ENCODE measurements at regions of chr3 and their contacts with region 1.

Region 1: GRCh38 chr3:169780742-169781141 is 7.5 kb downstream of the MYNN start:
- DNase-seq: no peak
- ATAC-seq: no peak
- H3K4me3 ChIP-seq: no peak overlapping the region
- H3K4me3 Mint-ChIP-seq: peak overlapping the region in 3 of 10 donors; percentile 21 to 87 (median 35)
- H3K27ac ChIP-seq: no peak overlapping the region
- H3K27ac Mint-ChIP-seq: peak overlapping the region in 5 of 9 donors; percentile 7 to 77 (median 25)
- H3K4me1 ChIP-seq: peaks cover 0 to 11% of the 10 kb centered on the region in 2 donors
- H3K4me1 Mint-ChIP-seq: peaks cover 30 to 56% (median 49%) of the 10 kb centered on the region in 7 donors
- H3K27me3 ChIP-seq: no peaks in the 10 kb centered on the region
- H3K27me3 Mint-ChIP-seq: no peaks in the 10 kb centered on the region

Region 2: GRCh38 chr3:169227911-169228310 is 552.8 kb before region 1 on chr3:
- CTCF ChIA-PET with region 1: no interaction called
- POLR2A ChIA-PET with region 1: no interaction called
- intact Hi-C with region 1: no loop called
- DNase-seq: no peak
- ATAC-seq: peak; percentile 69
- H3K4me3 ChIP-seq: no peak overlapping the region
- H3K4me3 Mint-ChIP-seq: no peak overlapping the region
- H3K27ac ChIP-seq: no peak overlapping the region
- H3K27ac Mint-ChIP-seq: no peak overlapping the region
- H3K4me1 ChIP-seq: no peaks in the 10 kb centered on the region
- H3K4me1 Mint-ChIP-seq: peaks cover 0 to 10% (median 0%) of the 10 kb centered on the region in 7 donors
- H3K27me3 ChIP-seq: no peaks in the 10 kb centered on the region
- H3K27me3 Mint-ChIP-seq: peaks cover 10 to 46% (median 18%) of the 10 kb centered on the region in 5 donors

Region 3: GRCh38 chr3:169790687-169791429 is 10.1 kb after region 1 on chr3:
- CTCF ChIA-PET with region 1: no interaction called
- POLR2A ChIA-PET with region 1: no interaction called
- intact Hi-C with region 1: loop called in 1 of 2 experiments (anchors 2 kb)
- DNase-seq: no peak
- ATAC-seq: no peak
- H3K4me3 ChIP-seq: no peak overlapping the region
- H3K4me3 Mint-ChIP-seq: no peak overlapping the region
- H3K27ac ChIP-seq: no peak overlapping the region
- H3K27ac Mint-ChIP-seq: peak overlapping the region in 1 of 9 donors; percentile 50
- H3K4me1 ChIP-seq: no peaks in the 10 kb centered on the region
- H3K4me1 Mint-ChIP-seq: peaks cover 0 to 21% (median 0%) of the 10 kb centered on the region in 7 donors
- H3K27me3 ChIP-seq: no peaks in the 10 kb centered on the region
- H3K27me3 Mint-ChIP-seq: no peaks in the 10 kb centered on the region

Region 4: GRCh38 chr3:170007031-170007663 is 226.4 kb after region 1 on chr3:
- CTCF ChIA-PET with region 1: no interaction called
- POLR2A ChIA-PET with region 1: no interaction called
- intact Hi-C with region 1: no loop called
- DNase-seq: peak in 8 of 9 donors; percentile 27 to 61 (median 48)
- ATAC-seq: peak; percentile 88
- H3K4me3 ChIP-seq: no peak overlapping the region
- H3K4me3 Mint-ChIP-seq: peak overlapping the region; percentile 38 to 76 (median 64)
- H3K27ac ChIP-seq: peak overlapping the region; percentile 19
- H3K27ac Mint-ChIP-seq: peak overlapping the region; percentile 26 to 91 (median 78)
- H3K4me1 ChIP-seq: peaks cover 4 to 34% of the 10 kb centered on the region in 2 donors
- H3K4me1 Mint-ChIP-seq: peaks cover 32 to 64% (median 50%) of the 10 kb centered on the region in 7 donors
- H3K27me3 ChIP-seq: no peaks in the 10 kb centered on the region
- H3K27me3 Mint-ChIP-seq: peaks cover 0 to 2% (median 0%) of the 10 kb centered on the region in 5 donors

Measured in naive thymus-derived CD4-positive, alpha-beta T cell (primary cell).